Left cardiac atrium (tissue), 4 donors: ENCODE measurements at regions of chr15 and their contacts with region 1.

Region 1: DNA sequence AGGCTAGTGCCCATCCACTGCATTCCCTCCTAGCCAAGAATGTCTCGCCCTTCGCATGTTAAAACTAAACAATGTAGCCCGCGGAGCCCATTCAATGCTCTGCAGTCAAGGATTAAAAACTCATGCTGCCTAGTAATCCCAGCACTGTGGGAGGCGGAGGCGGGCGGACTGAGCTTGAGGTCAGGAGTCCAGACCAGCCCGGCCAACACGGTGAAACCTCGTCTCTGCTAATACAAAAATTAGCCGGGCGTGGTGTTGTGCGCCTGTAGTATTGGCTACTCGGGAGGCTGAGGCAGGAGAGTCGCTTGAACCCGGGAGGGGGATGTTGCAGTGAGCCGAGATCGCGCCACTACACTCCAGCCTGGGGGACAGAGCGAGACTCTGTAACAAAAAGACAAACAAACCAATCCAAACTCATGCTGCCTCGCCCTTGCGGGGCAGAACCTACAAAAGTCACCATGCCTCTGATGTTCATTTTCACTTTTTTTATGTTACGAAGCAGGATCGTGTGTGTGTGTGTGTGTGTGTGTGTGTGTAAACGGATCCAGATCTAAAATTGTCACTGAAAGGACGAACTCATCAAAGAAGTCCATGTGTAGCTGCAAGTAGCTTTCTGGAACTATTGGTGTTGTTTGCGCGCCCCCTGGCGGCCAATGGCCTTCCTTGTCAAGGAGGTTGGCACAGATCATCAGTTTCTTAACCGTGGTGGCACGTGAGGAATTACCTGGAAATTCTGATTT is 54.8 kb upstream of the SPESP1 start:
- DNase-seq: peak; percentile 93
- ATAC-seq: peak; percentile 96 to 97

Region 2: DNA sequence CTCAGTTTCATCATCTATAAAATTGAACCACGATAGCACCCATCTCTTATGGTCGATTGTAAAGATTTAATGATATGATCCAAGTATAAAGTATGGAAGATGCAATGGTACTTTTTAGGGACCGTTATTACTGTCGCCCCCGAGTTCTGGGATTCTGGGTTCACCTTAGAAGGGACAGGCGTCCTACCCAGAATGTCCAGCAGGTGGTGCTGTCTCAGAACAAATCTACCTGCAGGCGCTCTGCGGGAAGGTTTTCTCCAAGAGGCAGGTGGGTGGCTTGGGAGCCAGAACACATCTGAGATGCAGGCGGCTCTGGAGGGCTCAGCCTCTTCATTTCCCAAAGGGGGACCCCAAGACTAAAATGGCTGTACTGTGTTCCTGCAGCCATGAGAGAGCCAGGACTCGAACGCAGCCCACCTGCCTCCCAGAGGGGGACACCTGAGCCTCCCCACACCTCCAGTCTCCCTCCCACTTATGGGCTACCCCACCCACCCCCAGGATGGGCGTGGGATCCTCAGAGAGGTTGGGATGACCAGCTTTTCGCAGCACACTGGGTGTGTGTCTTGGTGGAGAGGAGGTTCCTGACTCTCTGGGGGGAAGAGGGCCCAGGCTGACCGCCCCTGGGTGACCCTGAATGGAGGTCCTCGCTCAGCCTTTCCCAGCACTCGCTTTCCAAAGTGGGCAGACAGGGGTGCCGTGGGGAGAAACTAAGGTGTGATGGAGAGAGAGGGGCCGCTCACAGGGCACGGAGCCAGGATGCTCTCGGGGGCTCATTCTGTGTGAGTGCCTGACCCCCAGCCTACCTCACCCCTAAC is 324.9 kb before region 1 on chr15:
- intact Hi-C with region 1: loop called in 1 of 2 experiments (anchors 2 kb)
- DNase-seq: peak; percentile 80
- ATAC-seq: peak in 1 of 2 donors; percentile 15

Region 3: GRCh38 chr15:68559345-68560310 is 315.9 kb before region 1 on chr15:
- intact Hi-C with region 1: loop called in 1 of 2 experiments (anchors 2 kb)
- DNase-seq: peak; percentile 83
- ATAC-seq: peak; percentile 95

Region 4: GRCh38 chr15:68672781-68673205 is 202.8 kb before region 1 on chr15:
- intact Hi-C with region 1: loop called in 1 of 2 experiments (anchors 10 kb)
- DNase-seq: no peak
- ATAC-seq: no peak

Region 5: GRCh38 chr15:68730471-68730919 is 145.1 kb before region 1 on chr15:
- intact Hi-C with region 1: loop called in 1 of 2 experiments (anchors 1 kb)
- DNase-seq: peak; percentile 51
- ATAC-seq: peak; percentile 44 to 47